ENCODE measurements at regions of chr15 and their contacts with region 1.

Region 1: DNA sequence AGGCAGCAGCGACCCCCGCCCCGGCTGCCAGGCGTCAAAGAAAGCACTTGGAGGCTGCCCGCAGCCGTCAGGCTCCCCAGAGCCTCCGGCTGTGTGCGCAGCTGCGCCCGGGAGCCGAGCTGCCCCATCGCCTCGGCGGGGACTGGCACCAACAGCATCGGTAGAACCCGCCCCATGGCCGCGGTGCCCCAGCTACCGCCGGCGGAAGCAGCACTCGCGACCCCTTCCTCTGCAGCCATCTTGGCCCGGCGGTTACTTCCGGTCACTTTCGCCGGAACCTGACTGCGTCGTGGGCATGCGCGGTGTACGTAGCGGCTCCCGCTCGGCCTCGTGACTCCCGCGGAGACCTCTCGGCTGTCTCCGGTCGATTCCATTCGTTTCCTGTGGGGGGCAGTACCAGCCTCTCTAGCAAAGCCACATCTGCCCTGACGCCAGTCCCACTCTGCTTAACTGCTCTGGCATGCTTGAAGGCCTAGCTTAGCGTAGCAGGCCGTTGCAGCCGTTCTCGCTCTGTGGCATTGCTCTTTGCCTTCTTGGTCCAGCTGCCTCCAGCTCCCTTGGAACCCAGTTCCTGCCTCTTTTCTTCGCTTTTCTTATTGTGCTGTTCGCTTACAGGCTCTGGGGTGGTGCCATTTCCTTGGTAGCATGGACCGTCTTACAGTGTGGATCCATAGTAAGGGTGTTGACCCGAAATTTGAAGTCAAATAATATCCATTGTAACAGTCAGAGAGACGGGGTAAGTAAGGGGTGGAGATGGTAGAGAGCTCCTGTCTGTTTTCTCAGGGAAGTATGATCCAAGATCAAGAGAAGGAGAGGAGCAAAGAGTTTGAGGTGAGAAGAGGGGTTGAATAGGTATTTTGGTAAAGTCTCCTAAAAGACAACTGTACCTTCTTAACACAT is at the start of gene SPG11:
- DNase-seq: peak; percentile 96 to 98 (median 97)
- H3K4me3 ChIP-seq: peak within 1 kb of the TSS; percentile 86 to 100 (median 96)
- H3K27ac ChIP-seq: peak within 1 kb of the TSS; percentile 78 to 91
- H3K4me1 ChIP-seq: peaks cover 16 to 51% (median 33%) of the 10 kb centered on the region in 4 experiments
- H3K27me3 ChIP-seq: no peaks in the 10 kb centered on the region

Region 2: DNA sequence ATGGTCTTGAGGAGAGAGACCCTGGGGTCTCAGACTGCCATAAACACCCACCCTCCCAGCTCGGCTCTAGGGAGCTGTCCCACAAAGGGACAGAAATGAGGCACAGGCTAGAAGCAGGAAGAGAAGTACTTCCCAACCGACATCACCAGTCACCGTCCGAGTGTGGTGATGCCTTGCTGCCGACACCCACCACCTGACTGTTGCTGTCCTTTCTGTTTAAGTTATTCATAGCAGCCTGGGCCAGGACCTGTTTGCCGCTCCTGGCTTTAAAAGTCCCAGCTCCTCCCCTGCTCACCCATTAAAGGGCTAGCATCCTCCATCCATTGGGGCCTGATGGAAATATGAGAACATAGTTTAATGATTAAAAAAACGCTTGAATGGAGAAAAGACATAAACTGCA is 13.0 kb after region 1 on chr15:
- CTCF ChIA-PET with region 1: interaction called, 21 read pairs
- POLR2A ChIA-PET with region 1: interaction called, 4 read pairs
- DNase-seq: peak in 1 of 3 donors; percentile 26
- H3K4me3 ChIP-seq: no peak overlapping the region
- H3K27ac ChIP-seq: no peak overlapping the region
- H3K4me1 ChIP-seq: peaks cover 5 to 23% (median 22%) of the 10 kb centered on the region in 4 experiments
- H3K27me3 ChIP-seq: no peaks in the 10 kb centered on the region

Region 3: DNA sequence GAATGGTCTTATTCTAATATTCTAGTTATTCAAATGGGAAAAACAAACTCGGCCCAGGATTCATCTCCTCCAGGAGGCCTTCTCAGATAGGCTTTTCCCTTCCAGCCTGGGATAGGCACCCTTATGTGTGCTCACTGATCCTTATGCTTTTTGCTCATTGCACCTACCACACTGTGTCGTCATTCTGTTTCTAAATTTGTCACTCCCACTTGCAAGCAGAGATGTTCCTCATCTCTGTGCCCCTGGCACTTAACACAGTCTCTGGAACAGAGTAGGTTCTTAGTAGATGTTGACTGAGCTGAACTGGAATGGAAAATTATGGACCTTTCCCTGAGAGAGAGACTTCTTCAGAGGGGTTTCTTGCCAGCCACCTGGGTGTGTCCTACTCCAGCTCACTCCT is 18.6 kb after region 1 on chr15:
- CTCF ChIA-PET with region 1: interaction called, 21 read pairs
- POLR2A ChIA-PET with region 1: no interaction called
- DNase-seq: no peak
- H3K4me3 ChIP-seq: no peak overlapping the region
- H3K27ac ChIP-seq: no peak overlapping the region
- H3K4me1 ChIP-seq: peaks cover 5 to 29% (median 26%) of the 10 kb centered on the region in 4 experiments
- H3K27me3 ChIP-seq: no peaks in the 10 kb centered on the region

Region 4: DNA sequence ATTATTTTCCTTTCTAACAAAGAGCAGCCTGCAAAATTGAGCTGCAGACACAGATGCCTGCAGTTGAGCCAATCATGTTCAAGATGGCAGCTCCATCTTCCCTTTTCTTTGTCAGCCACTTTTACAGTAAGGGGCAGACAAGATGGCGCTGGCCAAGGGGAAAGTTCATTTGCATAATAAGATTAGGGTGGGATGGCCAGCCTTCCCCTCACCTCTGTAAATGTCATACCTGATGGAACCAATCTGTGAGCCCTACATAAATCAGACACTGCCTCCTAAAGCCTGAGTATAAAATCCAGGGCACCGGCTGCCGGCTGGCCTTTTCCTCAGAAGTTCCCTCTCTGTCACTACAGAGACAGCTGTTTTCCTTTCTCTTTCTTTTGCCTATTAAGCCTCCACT is 31.6 kb after region 1 on chr15:
- CTCF ChIA-PET with region 1: interaction called, 11 read pairs
- POLR2A ChIA-PET with region 1: interaction called, 3 read pairs
- DNase-seq: no peak
- H3K4me3 ChIP-seq: no peak overlapping the region
- H3K27ac ChIP-seq: no peak overlapping the region
- H3K4me1 ChIP-seq: no peaks in the 10 kb centered on the region
- H3K27me3 ChIP-seq: no peaks in the 10 kb centered on the region

Region 5: DNA sequence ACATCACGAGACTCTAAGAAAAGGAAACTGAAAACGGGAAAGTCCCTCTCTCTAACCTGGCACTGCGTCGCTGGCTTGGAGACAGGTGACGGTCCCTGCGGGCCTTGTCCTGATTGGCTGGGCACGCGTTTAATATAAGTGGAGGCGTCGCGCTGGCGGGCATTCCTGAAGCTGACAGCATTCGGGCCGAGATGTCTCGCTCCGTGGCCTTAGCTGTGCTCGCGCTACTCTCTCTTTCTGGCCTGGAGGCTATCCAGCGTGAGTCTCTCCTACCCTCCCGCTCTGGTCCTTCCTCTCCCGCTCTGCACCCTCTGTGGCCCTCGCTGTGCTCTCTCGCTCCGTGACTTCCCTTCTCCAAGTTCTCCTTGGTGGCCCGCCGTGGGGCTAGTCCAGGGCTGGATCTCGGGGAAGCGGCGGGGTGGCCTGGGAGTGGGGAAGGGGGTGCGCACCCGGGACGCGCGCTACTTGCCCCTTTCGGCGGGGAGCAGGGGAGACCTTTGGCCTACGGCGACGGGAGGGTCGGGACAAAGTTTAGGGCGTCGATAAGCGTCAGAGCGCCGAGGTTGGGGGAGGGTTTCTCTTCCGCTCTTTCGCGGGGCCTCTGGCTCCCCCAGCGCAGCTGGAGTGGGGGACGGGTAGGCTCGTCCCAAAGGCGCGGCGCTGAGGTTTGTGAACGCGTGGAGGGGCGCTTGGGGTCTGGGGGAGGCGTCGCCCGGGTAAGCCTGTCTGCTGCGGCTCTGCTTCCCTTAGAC is 47.9 kb after region 1 on chr15 and contains the start of gene B2M:
- CTCF ChIA-PET with region 1: interaction called, 85 read pairs
- POLR2A ChIA-PET with region 1: interaction called, 69 read pairs
- DNase-seq: peak; percentile 97 to 99 (median 99)
- H3K4me3 ChIP-seq: peak within 1 kb of the TSS; percentile 83 to 100 (median 94)
- H3K27ac ChIP-seq: peak within 1 kb of the TSS; percentile 97 to 99
- H3K4me1 ChIP-seq: peaks cover 18 to 49% (median 29%) of the 10 kb centered on the region in 4 experiments
- H3K27me3 ChIP-seq: no peaks in the 10 kb centered on the region

Region 6: DNA sequence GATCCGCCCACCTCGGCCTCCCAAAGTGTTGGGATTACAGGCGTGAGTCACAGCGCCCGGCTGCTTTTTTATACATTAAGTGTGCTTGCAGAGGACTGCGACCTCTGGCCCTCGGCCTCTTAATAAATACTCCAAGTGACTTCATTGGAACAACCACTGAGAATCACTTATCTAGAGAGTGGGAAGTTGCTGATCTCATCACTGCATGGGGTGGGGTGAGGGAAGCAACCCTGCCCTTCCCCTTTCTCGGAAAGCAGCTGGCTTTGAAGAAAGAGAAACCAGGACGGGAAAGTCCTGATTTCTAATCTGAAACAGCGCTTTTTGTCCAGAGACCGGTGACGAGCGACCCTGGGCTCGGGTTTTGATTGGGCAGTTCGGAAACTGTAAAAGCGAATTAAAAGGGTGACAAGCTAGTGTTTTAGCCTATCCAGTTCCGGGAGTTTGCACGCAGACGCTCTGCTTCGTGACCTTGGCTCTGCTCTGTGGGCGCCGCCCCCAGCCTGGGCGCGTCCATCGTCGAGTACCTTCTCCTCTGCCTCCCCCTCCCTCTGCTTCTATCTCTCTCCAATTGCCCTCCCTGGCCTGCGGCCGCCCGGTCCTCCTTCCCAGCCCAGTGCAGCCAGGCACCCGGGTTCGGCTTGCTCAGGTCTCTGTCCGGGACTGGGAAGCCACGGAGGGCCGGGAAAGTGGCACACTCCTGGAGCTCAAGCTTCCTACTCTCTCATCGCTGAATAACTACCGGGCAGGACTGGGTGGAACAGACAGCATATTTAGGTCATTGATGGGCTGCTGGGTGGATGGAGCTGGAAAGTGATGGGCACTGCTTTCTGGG is 65.1 kb after region 1 on chr15:
- CTCF ChIA-PET with region 1: interaction called, 125 read pairs
- POLR2A ChIA-PET with region 1: interaction called, 11 read pairs
- DNase-seq: peak; percentile 98 to 99 (median 99)
- H3K4me3 ChIP-seq: peak overlapping the region; percentile 77 to 94 (median 85)
- H3K27ac ChIP-seq: peak overlapping the region; percentile 72 to 91
- H3K4me1 ChIP-seq: peaks cover 36 to 60% (median 52%) of the 10 kb centered on the region in 4 experiments
- H3K27me3 ChIP-seq: no peaks in the 10 kb centered on the region

Region 7: DNA sequence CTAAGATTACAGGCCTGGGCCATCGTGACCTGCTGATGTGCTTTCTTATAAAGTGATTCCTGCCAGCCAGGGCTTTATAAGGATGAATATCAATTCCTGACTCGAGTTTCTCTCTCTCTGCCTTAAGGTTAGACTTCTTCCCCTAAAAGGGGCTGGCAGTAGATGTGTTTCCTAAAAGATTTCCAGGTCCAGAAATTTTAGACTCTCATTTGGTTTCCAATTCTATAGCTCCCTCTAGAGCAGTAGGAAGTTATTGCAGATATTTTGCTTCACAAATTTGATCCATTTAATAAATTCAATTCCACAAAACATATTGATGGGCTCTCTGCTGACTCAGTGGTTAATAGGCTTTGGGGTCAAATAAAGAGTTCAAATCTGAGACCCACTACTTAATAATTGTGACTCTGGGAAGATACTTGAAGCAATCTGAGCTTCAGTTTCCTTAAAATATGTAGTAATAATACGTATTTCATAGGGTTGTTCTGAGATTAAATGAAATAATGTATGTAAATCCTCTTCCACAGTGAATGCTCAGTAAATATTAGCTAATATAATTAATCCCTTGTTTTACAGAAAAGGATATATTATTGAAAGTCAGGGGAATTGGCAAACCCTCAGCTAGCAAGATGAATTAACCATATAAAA is 74.8 kb after region 1 on chr15:
- CTCF ChIA-PET with region 1: interaction called, 125 read pairs
- POLR2A ChIA-PET with region 1: interaction called, 13 read pairs
- DNase-seq: peak; percentile 60 to 78 (median 65)
- H3K4me3 ChIP-seq: no peak overlapping the region
- H3K27ac ChIP-seq: no peak overlapping the region
- H3K4me1 ChIP-seq: peaks cover 0 to 23% (median 9%) of the 10 kb centered on the region in 4 experiments
- H3K27me3 ChIP-seq: no peaks in the 10 kb centered on the region

Region 8: GRCh38 chr15:44956388-44956787 is 292.7 kb after region 1 on chr15 and contains the start of gene TERB2:
- CTCF ChIA-PET with region 1: no interaction called
- POLR2A ChIA-PET with region 1: no interaction called
- DNase-seq: no peak
- H3K4me3 ChIP-seq: no peak within 1 kb of the TSS
- H3K27ac ChIP-seq: no peak within 1 kb of the TSS
- H3K4me1 ChIP-seq: no peaks in the 10 kb centered on the region
- H3K27me3 ChIP-seq: no peaks in the 10 kb centered on the region